Right ventricle myocardium inferior (tissue), 1 donor: ENCODE measurements at regions of chr20 and their contacts with region 1.

Region 1: DNA sequence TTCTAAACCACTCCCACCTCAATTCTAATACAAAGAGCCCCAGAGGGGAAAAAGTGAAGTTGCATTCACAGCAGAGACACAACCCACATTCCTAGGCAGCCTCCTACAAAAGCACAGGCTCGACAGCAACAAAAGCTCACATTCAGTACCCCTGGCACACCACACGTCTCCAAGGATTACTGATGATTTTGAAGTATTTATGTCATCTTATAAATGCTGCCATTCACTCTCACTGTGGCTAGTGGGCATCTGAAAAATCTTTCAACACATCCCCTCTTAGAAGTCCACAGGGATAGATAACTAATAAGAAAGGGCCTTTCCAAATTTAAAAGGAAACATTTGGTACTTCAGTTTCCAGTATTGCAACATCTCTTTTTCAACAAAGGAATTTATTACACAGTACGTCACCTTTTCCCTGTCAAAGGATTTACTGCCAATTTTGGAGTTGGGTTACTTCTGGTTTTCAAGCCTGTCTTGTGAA is 146.7 kb downstream of the TASP1 start:
- DNase-seq: no peak
- ATAC-seq: peak; percentile 96

Region 2: DNA sequence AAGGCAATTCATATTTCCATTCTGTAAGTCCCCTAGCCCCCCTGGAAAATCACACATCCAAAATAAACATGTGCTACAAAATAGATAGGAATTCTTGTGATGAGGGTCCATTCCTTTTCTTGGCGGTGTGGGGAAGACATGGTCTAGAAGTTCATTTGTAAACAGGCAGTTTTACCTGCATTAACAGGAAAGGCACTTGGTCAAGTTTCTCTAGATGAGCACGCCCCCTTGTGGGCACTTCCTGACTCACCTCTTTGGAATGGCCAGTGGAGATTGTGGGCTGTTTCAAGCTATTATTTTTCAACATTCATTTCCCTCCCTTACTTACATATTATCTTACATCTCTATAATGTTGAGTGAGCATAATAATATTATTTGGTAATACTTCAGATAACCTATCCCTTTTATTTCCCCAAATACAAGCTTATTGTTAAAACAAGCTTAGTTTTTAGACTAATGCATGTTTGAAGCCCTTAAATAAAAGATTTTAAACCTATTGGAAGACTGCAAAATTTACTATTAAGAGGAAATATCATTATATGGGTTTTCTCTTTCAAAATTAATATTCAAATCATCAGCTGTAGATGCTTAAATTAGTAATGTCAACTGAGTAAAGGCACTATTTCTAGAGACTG is 54.6 kb after region 1 on chr20:
- intact Hi-C with region 1: loop called (anchors 5 kb)
- DNase-seq: peak; percentile 67
- ATAC-seq: no peak